A549 (cell line): ENCODE measurements at regions of chr4 and their contacts with region 1.

Region 1: DNA sequence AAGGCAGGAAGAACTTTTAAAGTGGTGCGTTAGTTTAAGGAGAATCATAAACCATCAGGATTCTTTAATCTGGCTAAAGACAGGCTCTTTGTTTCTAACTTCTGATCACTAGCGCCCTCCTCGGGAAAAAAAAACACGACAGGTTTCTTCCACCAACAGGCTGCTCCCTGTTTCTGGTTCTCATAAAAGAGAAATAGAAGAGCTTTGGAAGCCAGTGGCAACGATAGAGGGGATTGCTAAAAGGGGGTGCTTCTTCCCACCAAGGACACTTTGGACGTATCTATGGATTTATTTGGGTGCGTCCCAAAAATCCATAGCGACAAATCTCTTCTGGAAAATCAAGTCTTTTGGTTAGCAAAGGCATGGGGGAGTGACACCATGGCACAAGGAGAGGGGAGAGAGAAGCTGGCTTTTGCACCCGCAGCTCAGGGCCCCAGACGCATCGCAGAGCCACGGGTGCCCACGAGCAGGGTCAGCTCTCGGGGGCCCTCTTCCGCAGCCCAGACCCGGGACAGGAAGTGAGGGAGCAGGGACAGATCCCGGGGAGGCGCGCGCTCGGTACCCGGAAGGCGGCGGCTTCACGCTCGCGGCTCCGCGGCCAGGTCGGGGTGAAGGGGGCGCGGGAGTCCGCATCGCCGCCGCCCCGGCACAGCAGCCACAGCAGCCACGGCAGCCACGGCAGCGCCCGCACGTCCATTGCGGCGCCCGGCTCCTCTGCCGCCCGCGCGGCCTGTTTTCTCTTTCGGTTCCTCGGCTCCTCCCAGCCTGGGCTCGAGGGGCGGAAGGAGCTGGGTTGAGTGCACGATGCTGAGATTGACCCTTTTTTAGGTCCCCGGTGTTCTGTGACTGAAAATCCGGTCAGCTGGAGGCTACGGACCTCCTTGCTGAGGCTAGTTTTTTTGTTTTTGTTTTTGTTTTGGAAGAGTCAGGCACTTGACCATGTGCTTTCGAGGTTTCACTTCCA is at the start of gene CTSO:
- DNase-seq: peak; percentile 44 to 67
- ATAC-seq: peak; percentile 99
- H3K4me3 ChIP-seq: peak within 1 kb of the TSS; percentile 61
- H3K27ac ChIP-seq: peak within 1 kb of the TSS; percentile 88 to 100
- H3K4me1 ChIP-seq: no peaks in the 10 kb centered on the region
- CTCF ChIP-seq: peak; percentile 67
- EP300 ChIP-seq: no peak
- POLR2A ChIP-seq: peak; percentile 40
- RAD21 ChIP-seq: peak; percentile 47 to 69
- polyA plus RNA-seq, gene CTSO: 1.7 and 2.0 TPM in 2 replicates

Region 2: GRCh38 chr4:155403886-155404285 is 549.5 kb before region 1 on chr4:
- CTCF ChIA-PET with region 1: interaction called, 19 read pairs
- POLR2A ChIA-PET with region 1: interaction called, 5 read pairs
- DNase-seq: peak; percentile 6 to 40
- ATAC-seq: peak; percentile 70 to 78; a peak in 3 of 6 replicates
- H3K4me3 ChIP-seq: no peak overlapping the region
- H3K27ac ChIP-seq: no peak overlapping the region
- H3K4me1 ChIP-seq: peaks cover 13% of the 10 kb centered on the region; the same call in 1 of the 3 replicates
- CTCF ChIP-seq: peak; percentile 53
- EP300 ChIP-seq: no peak
- POLR2A ChIP-seq: no peak
- RAD21 ChIP-seq: peak; percentile 67 to 75

Region 3: GRCh38 chr4:155809835-155810234 is 143.6 kb before region 1 on chr4:
- CTCF ChIA-PET with region 1: interaction called, 8 read pairs
- POLR2A ChIA-PET with region 1: interaction called, 13 read pairs
- DNase-seq: peak; percentile 27 to 88
- ATAC-seq: peak; percentile 50 to 85; a peak in 4 of 6 replicates
- H3K4me3 ChIP-seq: no peak overlapping the region
- H3K27ac ChIP-seq: no peak overlapping the region
- H3K4me1 ChIP-seq: no peaks in the 10 kb centered on the region
- CTCF ChIP-seq: peak; percentile 63
- EP300 ChIP-seq: no peak
- POLR2A ChIP-seq: no peak
- RAD21 ChIP-seq: peak; percentile 74 to 79

Region 4: DNA sequence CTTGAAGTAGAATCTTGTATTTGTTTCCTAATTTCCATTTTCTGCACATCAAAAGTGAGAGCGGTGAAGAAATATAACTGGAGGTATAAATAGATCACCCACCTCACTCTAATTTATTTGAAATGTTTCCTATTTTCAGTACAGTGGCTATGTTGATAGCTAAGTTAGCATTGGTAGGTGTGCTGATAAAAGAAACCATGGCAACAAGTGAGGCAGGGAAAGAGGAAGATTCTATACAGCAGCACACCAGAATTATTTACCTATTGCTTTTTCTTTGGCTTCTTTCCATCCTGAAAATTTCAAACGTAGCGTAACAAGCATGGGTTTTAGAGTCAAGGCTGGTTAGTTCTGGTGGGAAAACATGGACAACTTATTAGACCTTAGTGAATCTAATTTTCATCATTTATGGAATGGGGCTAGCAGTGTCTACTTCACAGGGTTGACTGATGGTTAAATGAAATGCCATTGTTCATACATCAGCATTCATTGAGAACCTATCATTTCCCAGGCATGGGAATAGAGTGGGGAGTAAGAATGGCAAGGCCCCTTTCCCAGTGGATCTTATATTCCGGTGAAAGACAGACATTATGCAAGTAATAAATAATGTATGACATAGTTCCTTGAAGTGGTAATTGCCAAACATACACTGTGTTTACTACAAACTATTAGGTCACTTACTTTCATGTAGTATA is 30.8 kb after region 1 on chr4:
- CTCF ChIA-PET with region 1: no interaction called
- POLR2A ChIA-PET with region 1: no interaction called
- DNase-seq: no peak
- ATAC-seq: no peak
- H3K4me3 ChIP-seq: no peak overlapping the region
- H3K27ac ChIP-seq: no peak overlapping the region
- H3K4me1 ChIP-seq: no peaks in the 10 kb centered on the region
- CTCF ChIP-seq: no peak
- EP300 ChIP-seq: no peak
- POLR2A ChIP-seq: no peak
- RAD21 ChIP-seq: no peak